ENCODE measurements at regions of chr14 and their contacts with region 1.

Region 1: GRCh38 chr14:50612806-50613205 is 52.9 kb downstream of the ATL1 start:
- DNase-seq: no peak
- ATAC-seq: no peak
- H3K4me3 Mint-ChIP-seq: no peak overlapping the region
- H3K27ac Mint-ChIP-seq: no peak overlapping the region
- H3K4me1 Mint-ChIP-seq: no peaks in the 10 kb centered on the region
- H3K27me3 Mint-ChIP-seq: no peaks in the 10 kb centered on the region

Region 2: DNA sequence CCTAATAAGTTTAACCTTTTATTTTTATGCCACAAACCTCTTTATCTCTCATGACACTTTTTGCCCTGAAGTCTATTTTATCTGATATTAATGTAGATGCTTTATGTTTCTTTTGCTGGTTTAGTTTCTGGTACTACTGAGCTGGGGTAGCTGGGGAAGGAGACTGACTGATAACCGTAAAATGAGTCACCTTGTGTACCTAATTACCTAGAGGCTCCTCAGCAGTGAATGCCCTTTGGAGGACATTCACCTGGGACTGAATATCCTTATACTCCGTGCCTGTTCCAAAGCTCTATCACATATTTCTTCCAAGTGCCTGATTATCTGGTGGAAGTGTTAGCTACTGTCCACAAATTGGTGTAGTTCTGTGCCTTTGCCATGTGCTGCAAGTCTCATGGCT is 38.9 kb before region 1 on chr14:
- CTCF ChIA-PET with region 1: no interaction called
- POLR2A ChIA-PET with region 1: no interaction called
- intact Hi-C with region 1: loop called in 1 of 2 experiments (anchors 1 kb)
- DNase-seq: no peak
- ATAC-seq: peak; percentile 36
- H3K4me3 Mint-ChIP-seq: no peak overlapping the region
- H3K27ac Mint-ChIP-seq: no peak overlapping the region
- H3K4me1 Mint-ChIP-seq: no peaks in the 10 kb centered on the region
- H3K27me3 Mint-ChIP-seq: no peaks in the 10 kb centered on the region